IMR-90 (cell line): ENCODE measurements at regions of chr15 and their contacts with region 1.

Region 1: DNA sequence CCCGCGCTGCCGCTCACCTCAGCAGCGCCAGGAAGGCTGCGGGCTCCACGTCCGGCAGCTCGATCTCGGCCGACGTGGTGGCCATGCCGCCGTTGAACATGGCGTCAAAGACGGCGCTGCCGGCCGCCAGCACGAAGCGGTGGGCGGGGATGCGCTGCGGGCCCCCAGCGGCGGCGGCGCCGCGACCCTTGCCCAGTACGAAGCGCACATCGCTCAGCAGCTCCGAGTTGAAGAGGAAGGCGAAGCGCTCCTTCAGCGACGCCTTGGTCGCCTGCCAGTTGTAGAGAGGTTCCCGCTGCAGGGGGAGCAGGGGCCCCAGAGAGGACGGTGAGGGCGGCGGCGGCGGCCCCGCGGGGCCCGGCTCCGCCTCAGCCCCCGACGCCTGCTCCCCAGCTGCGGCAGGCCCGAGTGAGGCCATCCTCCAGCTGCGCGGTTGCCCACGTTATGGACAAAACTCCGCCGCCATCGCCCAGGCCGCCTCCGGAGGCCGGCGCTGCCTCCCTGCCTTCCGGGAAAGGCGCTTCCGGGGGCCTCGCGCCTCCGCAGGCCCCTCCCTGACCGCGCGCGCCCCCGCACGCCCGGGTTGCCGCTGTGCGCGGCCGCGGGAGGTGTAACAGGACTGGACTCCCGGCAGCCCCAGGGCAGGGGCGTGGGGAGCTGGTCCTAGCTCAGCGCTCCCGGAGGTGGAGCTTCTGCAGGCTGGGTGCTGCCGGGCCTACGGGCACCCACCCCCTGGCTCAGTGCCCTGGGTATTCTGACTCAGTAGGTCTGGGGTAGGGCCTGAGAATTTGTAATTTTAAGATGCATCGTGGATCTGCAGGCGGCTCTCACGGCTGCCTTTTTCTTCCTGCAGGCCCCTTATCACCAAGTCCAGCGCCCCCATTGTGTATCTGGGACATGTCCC is at the start of gene BTBD1:
- DNase-seq: peak; percentile 96
- ATAC-seq: peak; percentile 98
- H3K4me3 ChIP-seq: peak within 1 kb of the TSS; percentile 90
- H3K27ac ChIP-seq: peak within 1 kb of the TSS; percentile 82
- H3K4me1 ChIP-seq: peaks cover 7% of the 10 kb centered on the region
- H3K27me3 ChIP-seq: no peaks in the 10 kb centered on the region
- CTCF ChIP-seq: 0 out of 2 replicates have a peak, but pooled peaks have one; percentile 1
- POLR2A ChIP-seq: peak; percentile 94
- RAD21 ChIP-seq: no peak
- total RNA-seq, gene BTBD1: 78.7 and 90.5 TPM in 2 replicates

Region 2: DNA sequence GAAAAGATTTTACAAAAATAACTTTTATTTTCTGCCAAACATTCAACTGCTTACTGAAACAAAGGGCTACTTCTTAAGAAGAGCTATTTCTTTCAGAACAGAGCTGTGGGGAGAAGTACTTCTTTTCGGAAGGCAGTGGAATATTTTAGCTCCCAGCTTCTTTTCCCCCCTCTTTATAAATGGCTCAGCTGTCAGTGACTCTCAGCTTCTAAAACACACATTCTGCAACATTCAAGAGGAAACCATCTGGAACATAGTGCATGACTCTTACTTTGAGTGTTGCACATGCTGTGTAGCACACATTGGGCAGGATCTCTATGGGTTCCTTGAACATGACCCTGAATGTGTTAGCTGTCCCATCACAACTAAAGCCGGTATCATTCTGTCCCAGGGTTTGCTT is 48.5 kb before region 1 on chr15:
- CTCF ChIA-PET with region 1: no interaction called
- POLR2A ChIA-PET with region 1: no interaction called
- dilution Hi-C with region 1: no loop called
- in situ Hi-C with region 1: loop called (anchors 5 kb)
- intact Hi-C with region 1: no loop called
- DNase-seq: peak; percentile 28
- ATAC-seq: no peak
- H3K4me3 ChIP-seq: no peak overlapping the region
- H3K27ac ChIP-seq: no peak overlapping the region
- H3K4me1 ChIP-seq: no peaks in the 10 kb centered on the region
- H3K27me3 ChIP-seq: no peaks in the 10 kb centered on the region
- CTCF ChIP-seq: no peak
- POLR2A ChIP-seq: no peak
- RAD21 ChIP-seq: no peak

Region 3: GRCh38 chr15:83112233-83112955 is 45.4 kb after region 1 on chr15:
- CTCF ChIA-PET with region 1: no interaction called
- POLR2A ChIA-PET with region 1: no interaction called
- dilution Hi-C with region 1: no loop called
- in situ Hi-C with region 1: no loop called
- intact Hi-C with region 1: loop called (anchors 2 kb)
- DNase-seq: peak; percentile 95
- ATAC-seq: peak; percentile 92
- H3K4me3 ChIP-seq: no peak overlapping the region
- H3K27ac ChIP-seq: peak overlapping the region; percentile 77
- H3K4me1 ChIP-seq: peaks cover 18% of the 10 kb centered on the region
- H3K27me3 ChIP-seq: no peaks in the 10 kb centered on the region
- CTCF ChIP-seq: peak; percentile 46
- POLR2A ChIP-seq: no peak
- RAD21 ChIP-seq: peak; percentile 47

Region 4: GRCh38 chr15:83207622-83208411 is 140.8 kb after region 1 on chr15 and contains the start of gene HDGFL3:
- CTCF ChIA-PET with region 1: no interaction called
- POLR2A ChIA-PET with region 1: no interaction called
- dilution Hi-C with region 1: no loop called
- in situ Hi-C with region 1: no loop called
- intact Hi-C with region 1: loop called (anchors 1 kb)
- DNase-seq: peak; percentile 39
- ATAC-seq: peak; percentile 63
- H3K4me3 ChIP-seq: peak within 1 kb of the TSS; percentile 97
- H3K27ac ChIP-seq: peak within 1 kb of the TSS; percentile 84
- H3K4me1 ChIP-seq: peaks cover 8% of the 10 kb centered on the region
- H3K27me3 ChIP-seq: no peaks in the 10 kb centered on the region
- CTCF ChIP-seq: no peak
- POLR2A ChIP-seq: peak; percentile 85
- RAD21 ChIP-seq: peak; percentile 11; the same call in 1 of the 2 replicates
- total RNA-seq, gene HDGFL3: 9.5 and 31.4 TPM in 2 replicates

Region 5: GRCh38 chr15:83283138-83283812 is 216.3 kb after region 1 on chr15:
- CTCF ChIA-PET with region 1: no interaction called
- POLR2A ChIA-PET with region 1: no interaction called
- dilution Hi-C with region 1: no loop called
- in situ Hi-C with region 1: no loop called
- intact Hi-C with region 1: loop called (anchors 2 kb)
- DNase-seq: no peak
- ATAC-seq: no peak; the same call in 1 of the 2 replicates
- H3K4me3 ChIP-seq: peak overlapping the region; percentile 24; the same call in 1 of the 2 replicates
- H3K27ac ChIP-seq: no peak overlapping the region
- H3K4me1 ChIP-seq: peaks cover 8% of the 10 kb centered on the region
- H3K27me3 ChIP-seq: peaks cover 44% of the 10 kb centered on the region
- CTCF ChIP-seq: no peak
- POLR2A ChIP-seq: no peak
- RAD21 ChIP-seq: no peak